ENCODE measurements at regions of chr4 and their contacts with region 1.

Region 1: GRCh38 chr4:122758033-122758432 is 25.5 kb downstream of the BBS12 start:
- DNase-seq: no peak
- H3K4me3 ChIP-seq: no peak overlapping the region
- H3K27ac ChIP-seq: no peak overlapping the region
- H3K4me1 ChIP-seq: peaks cover 0 to 23% (median 10%) of the 10 kb centered on the region in 6 donors
- H3K27me3 ChIP-seq: peaks cover 0 to 17% (median 0%) of the 10 kb centered on the region in 7 donors
- CTCF ChIP-seq: peak; percentile 45 to 76 (median 62)
- POLR2A ChIP-seq: no peak

Region 2: DNA sequence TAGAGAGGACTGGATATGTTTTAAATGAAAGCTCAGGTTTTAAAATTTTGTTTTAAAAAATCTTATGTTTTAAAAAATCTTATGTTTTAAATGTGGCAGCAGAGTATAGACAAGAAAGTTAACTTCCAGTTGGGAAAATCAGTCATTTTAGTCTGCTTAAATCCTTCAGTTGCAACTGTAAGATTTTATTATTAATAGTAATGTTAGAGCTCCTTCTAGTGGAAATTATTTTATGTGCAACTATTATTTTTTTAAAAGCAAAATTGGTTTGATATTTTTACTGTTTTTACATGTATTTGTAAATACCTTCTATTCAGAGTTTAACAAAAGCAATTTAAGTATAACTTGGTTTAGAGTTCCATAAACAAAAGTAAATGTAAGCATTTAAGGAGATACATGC is 172.8 kb after region 1 on chr4:
- intact Hi-C with region 1: loop called (anchors 5 kb)
- DNase-seq: no peak
- H3K4me3 ChIP-seq: no peak overlapping the region
- H3K27ac ChIP-seq: no peak overlapping the region
- H3K4me1 ChIP-seq: peaks cover 0 to 11% (median 0%) of the 10 kb centered on the region in 6 donors
- H3K27me3 ChIP-seq: no peaks in the 10 kb centered on the region
- CTCF ChIP-seq: peak in 8 of 11 experiments; percentile 20 to 59 (median 46)
- POLR2A ChIP-seq: no peak

Region 3: DNA sequence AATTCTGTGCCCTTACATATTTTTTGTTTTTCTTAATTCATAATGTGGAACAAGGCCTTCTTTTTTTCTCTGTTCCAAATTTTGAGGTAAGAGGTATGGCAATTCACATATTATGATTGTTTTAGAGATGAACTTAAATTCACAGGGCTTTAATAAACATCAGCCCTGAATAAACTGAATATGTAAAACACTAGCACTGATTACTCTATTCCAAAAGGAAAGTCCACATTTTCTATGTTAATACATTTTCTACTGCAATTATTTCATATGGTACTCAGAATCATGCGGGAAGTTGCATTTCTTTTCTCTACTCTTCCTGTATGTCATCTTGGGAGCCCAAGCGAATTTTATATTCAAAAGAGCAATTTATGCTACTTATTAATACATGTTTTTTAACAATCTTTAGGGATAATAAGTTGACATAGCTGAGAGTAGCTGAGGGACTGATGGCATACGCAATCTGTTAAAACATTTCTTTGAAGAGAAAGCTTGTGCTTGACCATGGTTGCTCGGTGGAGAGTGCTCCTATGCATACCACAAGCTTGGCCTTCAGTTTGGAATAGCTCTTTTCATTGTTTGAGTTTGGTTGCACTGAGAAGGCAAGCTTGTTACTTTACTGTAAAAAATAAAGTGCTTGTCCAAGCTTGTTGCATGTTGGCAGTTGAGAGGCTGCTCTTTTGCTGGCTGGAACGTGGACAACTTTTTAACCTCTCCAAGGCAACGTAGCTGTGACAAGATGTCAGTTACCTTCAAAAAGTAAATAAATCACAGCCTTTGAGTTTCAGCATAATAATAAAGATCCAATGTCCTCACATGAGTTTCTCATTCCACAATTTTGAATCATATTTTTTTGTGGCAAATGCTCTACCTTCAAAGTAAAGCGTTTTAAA is 442.3 kb after region 1 on chr4:
- intact Hi-C with region 1: no loop called
- DNase-seq: no peak
- H3K4me3 ChIP-seq: no peak overlapping the region
- H3K27ac ChIP-seq: no peak overlapping the region
- H3K4me1 ChIP-seq: no peaks in the 10 kb centered on the region
- H3K27me3 ChIP-seq: no peaks in the 10 kb centered on the region
- CTCF ChIP-seq: no peak
- POLR2A ChIP-seq: no peak